ENCODE measurements at regions of chr1 and their contacts with region 1.

Region 1: DNA sequence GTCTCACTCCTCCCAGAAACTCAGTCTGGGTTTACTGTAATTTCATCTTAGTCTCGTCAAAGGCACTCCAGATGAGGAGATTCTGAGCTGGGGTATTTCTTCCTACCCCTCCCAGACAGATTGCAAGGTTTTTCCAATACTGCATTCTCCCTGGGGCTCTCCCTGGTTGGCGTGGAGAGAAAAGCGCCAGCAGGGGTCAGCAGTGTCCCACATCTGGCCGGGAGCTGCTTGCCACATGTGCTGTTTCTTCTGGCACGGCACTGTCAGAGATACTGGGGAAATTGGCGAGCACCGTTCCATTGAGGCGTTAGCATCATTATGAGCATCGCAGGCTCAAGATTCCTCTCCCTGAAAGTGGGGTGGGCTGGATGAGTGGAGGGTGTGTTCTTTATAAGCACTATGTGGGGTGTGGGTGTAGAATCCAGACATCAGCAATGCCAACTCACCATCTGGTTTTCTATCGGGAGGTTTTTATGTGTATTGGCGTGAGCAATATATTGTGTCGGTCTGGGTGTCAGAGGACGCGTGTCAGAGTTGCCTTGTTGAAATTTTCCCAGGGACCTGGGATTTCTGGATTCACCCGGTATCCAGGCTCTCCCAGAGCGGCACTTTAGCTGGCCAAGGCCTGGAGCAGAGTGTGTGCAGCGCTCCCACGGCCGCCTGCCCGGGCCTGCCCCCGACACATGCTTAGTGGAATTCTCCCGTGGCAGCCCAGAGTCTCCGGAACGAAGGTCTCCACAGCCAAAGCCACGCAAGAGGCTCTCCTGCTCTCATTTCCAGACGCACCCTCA is 8.0 kb upstream of the NAV1 start:
- DNase-seq: peak; percentile 43
- ATAC-seq: peak; percentile 95
- H3K4me3 ChIP-seq: no peak overlapping the region
- H3K27ac ChIP-seq: no peak overlapping the region
- H3K4me1 ChIP-seq: no peaks in the 10 kb centered on the region
- H3K27me3 ChIP-seq: peaks cover 5 to 28% of the 10 kb centered on the region in 2 experiments
- CTCF ChIP-seq: peak; percentile 85
- EP300 ChIP-seq: no peak
- POLR2A ChIP-seq: no peak
- RAD21 ChIP-seq: peak; percentile 60

Region 2: DNA sequence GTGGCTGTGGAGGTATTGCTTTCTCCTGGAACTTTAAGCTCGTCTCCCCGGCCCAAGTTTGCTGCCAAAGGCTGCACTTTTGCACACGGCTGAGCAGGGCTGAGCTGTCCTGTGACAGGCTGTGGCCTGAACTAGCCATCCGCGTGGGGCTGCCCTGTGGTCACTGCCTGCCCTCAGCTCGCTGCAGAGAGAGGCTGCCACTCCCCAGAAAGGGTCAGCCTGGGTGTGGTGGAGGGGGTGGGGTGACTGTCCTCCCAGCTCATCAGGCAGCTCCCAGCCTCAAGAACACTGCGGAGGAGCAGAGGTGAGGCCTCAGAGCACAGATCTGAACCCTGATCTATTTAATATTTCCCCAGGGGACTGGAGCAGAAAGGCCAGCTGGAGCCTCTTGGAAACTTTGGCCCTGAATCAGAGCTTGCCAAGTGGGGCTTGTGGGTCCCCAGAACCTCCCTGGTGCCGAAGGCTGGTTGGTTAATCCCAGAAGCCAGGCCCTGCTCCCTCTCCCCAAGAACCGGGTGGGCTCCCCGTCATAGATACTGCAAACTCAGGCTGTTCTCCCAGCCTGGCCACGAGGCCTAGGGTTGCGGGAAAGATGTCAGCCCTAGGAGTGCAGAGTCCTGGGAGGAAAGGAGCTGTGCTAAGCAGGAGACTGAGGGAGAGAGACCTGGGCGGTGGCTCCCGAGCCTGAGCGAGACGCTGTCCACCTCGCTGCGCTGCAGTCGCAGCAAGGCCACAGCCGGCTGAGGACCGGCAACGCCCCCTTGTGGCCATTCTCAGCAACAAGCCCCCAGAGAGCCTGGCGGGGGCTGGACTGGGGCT is 172.9 kb after region 1 on chr1:
- CTCF ChIA-PET with region 1: interaction called, 23 read pairs
- POLR2A ChIA-PET with region 1: no interaction called
- in situ Hi-C with region 1: no loop called
- intact Hi-C with region 1: loop called (anchors 1 kb)
- DNase-seq: peak; percentile 37
- ATAC-seq: peak; percentile 99
- H3K4me3 ChIP-seq: no peak overlapping the region
- H3K27ac ChIP-seq: no peak overlapping the region
- H3K4me1 ChIP-seq: peaks cover 4% of the 10 kb centered on the region; the same call in 1 of the 2 replicates
- H3K27me3 ChIP-seq: peaks cover 4 to 11% of the 10 kb centered on the region in 2 experiments; a peak in 2 of 5 replicates
- CTCF ChIP-seq: peak; percentile 95
- EP300 ChIP-seq: no peak
- POLR2A ChIP-seq: no peak
- RAD21 ChIP-seq: peak; percentile 89

Measured in HepG2 (cell line).